H1 (cell line): ENCODE measurements at regions of chr10 and their contacts with region 1.

Region 1: GRCh38 chr10:109998513-109998912 is 9.3 kb upstream of the ADD3 start:
- DNase-seq: no peak
- H3K4me3 ChIP-seq: no peak overlapping the region
- H3K27ac ChIP-seq: no peak overlapping the region
- H3K4me1 ChIP-seq: peaks cover under 1 to 10% (median 4%) of the 10 kb centered on the region in 4 experiments; a peak in 4 of 7 replicates
- H3K27me3 ChIP-seq: no peaks in the 10 kb centered on the region
- CTCF ChIP-seq: no peak
- EP300 ChIP-seq: no peak
- POLR2A ChIP-seq: no peak
- RAD21 ChIP-seq: no peak

Region 2: GRCh38 chr10:109987452-109988211 is 10.9 kb before region 1 on chr10:
- CTCF ChIA-PET with region 1: interaction called, 90 read pairs
- POLR2A ChIA-PET with region 1: interaction called, 4 read pairs
- DNase-seq: no peak
- H3K4me3 ChIP-seq: no peak overlapping the region
- H3K27ac ChIP-seq: no peak overlapping the region
- H3K4me1 ChIP-seq: no peaks in the 10 kb centered on the region
- H3K27me3 ChIP-seq: no peaks in the 10 kb centered on the region
- CTCF ChIP-seq: no peak
- EP300 ChIP-seq: no peak
- POLR2A ChIP-seq: no peak
- RAD21 ChIP-seq: no peak